Prostate gland (tissue), 2 donors: ENCODE measurements at regions of chr2 and their contacts with region 1.

Region 1: DNA sequence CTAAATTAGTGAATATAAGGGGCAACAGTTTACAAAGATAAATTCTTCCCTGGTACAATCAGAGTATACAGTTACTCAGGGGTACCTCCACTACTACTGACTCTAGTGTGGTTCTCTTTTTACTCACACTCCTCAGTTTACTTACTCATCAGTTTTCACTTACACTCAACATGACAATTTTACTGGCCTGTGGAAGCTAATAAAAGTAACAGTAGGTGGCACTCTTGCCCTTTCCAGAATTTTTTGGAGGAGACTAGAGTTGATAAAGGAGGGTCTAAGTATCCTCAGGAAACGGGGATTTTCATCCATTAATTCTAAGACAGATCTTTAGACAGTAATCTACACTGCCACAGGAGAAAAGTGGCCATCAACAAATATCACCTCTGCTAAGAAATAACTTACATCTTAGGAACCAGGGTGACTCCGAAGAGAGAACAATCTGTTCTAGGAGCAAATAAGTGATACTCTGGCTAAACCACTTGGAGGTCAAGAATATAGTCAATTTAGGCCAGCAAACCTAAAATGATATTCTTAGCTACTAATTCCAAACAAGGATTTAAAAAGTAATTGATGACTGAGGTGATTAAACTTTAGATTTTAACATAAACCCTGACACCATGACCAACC is 61.3 kb downstream of the ATL2 start:
- DNase-seq: no peak
- H3K4me3 ChIP-seq: no peak overlapping the region
- H3K27ac ChIP-seq: peak overlapping the region; percentile 24 to 27
- H3K4me1 ChIP-seq: peaks cover 3% of the 10 kb centered on the region
- H3K27me3 ChIP-seq: no peaks in the 10 kb centered on the region
- CTCF ChIP-seq: peak; percentile 47 to 72 (median 69)
- POLR2A ChIP-seq: no peak

Region 2: GRCh38 chr2:38474715-38475566 is 159.1 kb after region 1 on chr2:
- intact Hi-C with region 1: loop called (anchors 10 kb)
- DNase-seq: no peak
- H3K4me3 ChIP-seq: no peak overlapping the region
- H3K27ac ChIP-seq: no peak overlapping the region
- H3K4me1 ChIP-seq: no peaks in the 10 kb centered on the region
- H3K27me3 ChIP-seq: no peaks in the 10 kb centered on the region
- CTCF ChIP-seq: no peak
- POLR2A ChIP-seq: no peak

Region 3: GRCh38 chr2:38535744-38536506 is 220.1 kb after region 1 on chr2:
- intact Hi-C with region 1: loop called (anchors 10 kb)
- DNase-seq: peak; percentile 73
- H3K4me3 ChIP-seq: peak overlapping the region; percentile 27 to 31
- H3K27ac ChIP-seq: peak overlapping the region; percentile 32 to 58
- H3K4me1 ChIP-seq: no peaks in the 10 kb centered on the region
- H3K27me3 ChIP-seq: no peaks in the 10 kb centered on the region
- CTCF ChIP-seq: peak; percentile 81 to 96 (median 89)
- POLR2A ChIP-seq: no peak

Region 4: DNA sequence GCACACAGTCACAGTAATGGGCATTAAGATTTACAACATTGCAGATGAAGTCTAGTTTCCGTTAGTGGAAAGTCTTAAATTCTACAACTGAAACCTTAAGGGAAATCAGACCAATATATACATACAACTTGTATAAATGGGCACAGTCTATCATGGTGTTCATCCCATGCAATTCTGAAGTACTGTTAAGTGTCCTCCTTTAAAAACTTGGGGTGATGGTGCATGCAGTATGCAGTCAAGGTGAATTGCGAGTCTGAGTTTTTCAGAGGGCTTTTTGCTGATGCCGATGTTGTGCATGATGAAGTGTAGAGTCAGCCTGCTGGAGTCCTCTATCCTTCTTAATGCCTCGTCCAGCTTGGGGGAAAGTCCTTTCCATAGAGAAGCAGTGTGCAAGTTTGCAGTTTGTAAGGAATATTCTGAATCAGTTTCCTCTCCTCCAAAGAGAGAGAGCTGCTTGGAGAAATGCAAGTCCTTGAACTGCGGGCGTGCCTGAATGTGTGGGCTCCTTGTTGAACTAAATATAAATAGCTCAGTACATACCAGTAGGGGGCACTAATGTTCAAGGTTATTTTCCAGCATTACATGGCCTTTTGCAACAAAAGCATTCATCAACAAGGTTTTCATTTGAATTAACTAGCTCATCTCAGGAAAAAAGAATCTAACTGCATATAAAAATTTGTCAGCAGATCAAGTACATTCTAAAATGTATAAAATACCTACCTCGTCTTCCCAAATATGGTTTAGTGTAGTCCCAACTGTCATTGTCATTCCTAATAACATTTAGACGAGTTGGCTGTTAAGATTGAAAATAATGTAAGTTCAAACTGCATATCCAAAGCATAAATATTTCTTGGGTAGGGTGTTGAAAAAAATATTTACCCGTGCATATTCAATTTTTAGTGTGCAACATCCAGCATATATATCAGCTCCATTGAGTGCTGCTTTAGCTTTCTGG is 265.6 kb after region 1 on chr2:
- intact Hi-C with region 1: loop called (anchors 10 kb)
- DNase-seq: peak; percentile 41
- H3K4me3 ChIP-seq: no peak overlapping the region
- H3K27ac ChIP-seq: no peak overlapping the region
- H3K4me1 ChIP-seq: no peaks in the 10 kb centered on the region
- H3K27me3 ChIP-seq: no peaks in the 10 kb centered on the region
- CTCF ChIP-seq: peak; percentile 15 to 78 (median 74)
- POLR2A ChIP-seq: no peak

Region 5: DNA sequence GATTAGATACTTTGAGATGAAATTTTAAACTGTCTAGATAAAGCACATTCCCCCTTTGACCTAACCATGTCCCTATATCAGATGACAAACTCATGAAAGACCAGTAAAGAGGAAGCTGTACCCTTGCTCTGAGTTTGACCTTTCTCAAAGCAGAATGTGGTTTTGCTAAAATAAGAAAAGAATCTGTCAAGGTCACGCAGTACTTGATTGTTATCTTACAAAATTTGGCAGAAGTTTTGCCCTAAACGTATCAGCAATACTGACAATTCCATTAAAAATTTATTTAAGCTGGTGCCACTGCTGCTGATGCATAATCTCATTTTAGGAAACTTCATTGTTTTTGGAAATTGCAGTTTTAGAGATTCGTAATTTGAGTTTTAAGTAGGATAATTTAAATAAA is 318.9 kb after region 1 on chr2:
- intact Hi-C with region 1: no loop called
- DNase-seq: no peak
- H3K4me3 ChIP-seq: no peak overlapping the region
- H3K27ac ChIP-seq: no peak overlapping the region
- H3K4me1 ChIP-seq: no peaks in the 10 kb centered on the region
- H3K27me3 ChIP-seq: no peaks in the 10 kb centered on the region
- CTCF ChIP-seq: no peak
- POLR2A ChIP-seq: no peak

Region 6: DNA sequence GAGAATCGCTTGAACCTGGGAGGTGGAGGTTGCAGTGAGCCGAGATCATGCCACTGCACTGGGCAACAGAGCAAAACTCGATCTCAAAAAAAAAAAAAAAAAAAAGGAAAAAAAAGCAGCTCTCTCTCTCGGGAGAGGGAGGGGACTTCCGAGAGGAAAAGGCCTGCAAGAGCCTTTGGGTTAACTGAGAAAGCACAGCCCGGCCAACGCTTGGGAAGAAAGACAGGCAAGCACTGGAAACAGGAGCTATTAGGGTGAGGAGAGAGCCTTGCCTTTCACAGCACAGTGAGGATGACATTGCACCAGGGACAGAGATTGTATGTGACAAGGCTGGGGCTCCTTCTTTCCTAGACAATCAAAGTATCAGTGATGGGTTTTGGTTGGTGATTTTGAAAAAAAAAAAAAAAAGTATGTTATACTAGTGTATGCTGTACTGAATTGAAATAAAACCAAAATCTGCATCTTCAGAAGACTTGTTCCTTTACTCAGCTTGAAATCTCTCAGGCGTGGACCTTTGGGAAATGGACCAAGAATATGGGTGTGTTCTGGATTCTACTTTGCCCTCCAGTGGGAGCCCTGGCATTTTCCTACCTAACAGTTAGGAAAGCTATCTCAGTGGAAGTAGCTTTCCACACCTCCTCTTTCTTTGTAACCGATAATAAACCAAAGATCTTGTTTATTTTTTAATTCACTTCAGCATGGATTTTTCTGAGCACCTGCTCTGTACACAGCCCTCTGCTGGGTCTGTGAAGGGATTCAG is 418.7 kb after region 1 on chr2:
- intact Hi-C with region 1: loop called (anchors 5 kb)
- DNase-seq: no peak
- H3K4me3 ChIP-seq: no peak overlapping the region
- H3K27ac ChIP-seq: peak overlapping the region in 1 of 2 donors; percentile 2
- H3K4me1 ChIP-seq: no peaks in the 10 kb centered on the region
- H3K27me3 ChIP-seq: no peaks in the 10 kb centered on the region
- CTCF ChIP-seq: no peak
- POLR2A ChIP-seq: no peak